HCT116 (cell line): ENCODE measurements at regions of chr13 and their contacts with region 1.

Region 1: GRCh38 chr13:73822668-73823592 is 311.3 kb downstream of the KLF12 start:
- DNase-seq: no peak
- ATAC-seq: no peak
- H3K4me3 ChIP-seq: no peak overlapping the region
- H3K27ac ChIP-seq: no peak overlapping the region
- H3K4me1 ChIP-seq: no peaks in the 10 kb centered on the region
- H3K27me3 ChIP-seq: no peaks in the 10 kb centered on the region
- CTCF ChIP-seq: no peak
- POLR2A ChIP-seq: no peak
- RAD21 ChIP-seq: no peak

Region 2: GRCh38 chr13:73273741-73274140 is 549.2 kb before region 1 on chr13:
- CTCF ChIA-PET with region 1: no interaction called
- POLR2A ChIA-PET with region 1: no interaction called
- RAD21 ChIA-PET with region 1: no interaction called
- intact Hi-C with region 1: no loop called
- DNase-seq: no peak
- ATAC-seq: no peak
- H3K4me3 ChIP-seq: no peak overlapping the region
- H3K27ac ChIP-seq: no peak overlapping the region
- H3K4me1 ChIP-seq: peaks cover 0 to 1% of the 10 kb centered on the region in 2 experiments; a peak in 1 of 4 replicates
- H3K27me3 ChIP-seq: no peaks in the 10 kb centered on the region
- CTCF ChIP-seq: no peak
- POLR2A ChIP-seq: no peak
- RAD21 ChIP-seq: no peak

Region 3: GRCh38 chr13:73794755-73795154 is 28.2 kb before region 1 on chr13:
- CTCF ChIA-PET with region 1: no interaction called
- POLR2A ChIA-PET with region 1: no interaction called
- RAD21 ChIA-PET with region 1: no interaction called
- intact Hi-C with region 1: loop called (anchors 1 kb)
- DNase-seq: no peak
- ATAC-seq: no peak
- H3K4me3 ChIP-seq: no peak overlapping the region
- H3K27ac ChIP-seq: no peak overlapping the region
- H3K4me1 ChIP-seq: no peaks in the 10 kb centered on the region
- H3K27me3 ChIP-seq: no peaks in the 10 kb centered on the region
- CTCF ChIP-seq: no peak
- POLR2A ChIP-seq: no peak
- RAD21 ChIP-seq: no peak